HEK293 (cell line): ENCODE measurements at regions of chr1 and their contacts with region 1.

Region 1: DNA sequence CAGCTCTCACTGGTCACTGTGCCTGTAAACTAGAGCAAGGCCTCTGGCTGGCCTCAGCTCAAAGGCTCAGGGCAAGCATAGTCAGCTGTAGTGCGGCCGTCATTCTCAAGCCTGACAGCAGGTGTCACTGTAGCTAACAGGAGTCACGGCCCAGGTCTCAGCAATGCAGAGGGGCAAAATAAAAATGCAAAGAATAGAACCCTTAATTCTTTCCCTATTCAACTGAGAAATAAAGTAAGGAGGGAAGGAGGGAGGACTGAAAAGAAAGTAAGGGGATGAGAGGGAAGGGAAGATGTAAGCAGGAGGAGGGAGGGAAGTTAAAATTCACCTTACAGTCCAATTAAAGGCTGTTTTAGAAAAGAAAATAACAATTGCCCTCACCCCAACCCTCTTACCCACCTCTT is 106.1 kb downstream of the KIAA0319L start:
- H3K4me3 ChIP-seq: no peak overlapping the region
- H3K27ac ChIP-seq: no peak overlapping the region
- H3K4me1 ChIP-seq: no peaks in the 10 kb centered on the region
- CTCF ChIP-seq: no peak

Region 2: DNA sequence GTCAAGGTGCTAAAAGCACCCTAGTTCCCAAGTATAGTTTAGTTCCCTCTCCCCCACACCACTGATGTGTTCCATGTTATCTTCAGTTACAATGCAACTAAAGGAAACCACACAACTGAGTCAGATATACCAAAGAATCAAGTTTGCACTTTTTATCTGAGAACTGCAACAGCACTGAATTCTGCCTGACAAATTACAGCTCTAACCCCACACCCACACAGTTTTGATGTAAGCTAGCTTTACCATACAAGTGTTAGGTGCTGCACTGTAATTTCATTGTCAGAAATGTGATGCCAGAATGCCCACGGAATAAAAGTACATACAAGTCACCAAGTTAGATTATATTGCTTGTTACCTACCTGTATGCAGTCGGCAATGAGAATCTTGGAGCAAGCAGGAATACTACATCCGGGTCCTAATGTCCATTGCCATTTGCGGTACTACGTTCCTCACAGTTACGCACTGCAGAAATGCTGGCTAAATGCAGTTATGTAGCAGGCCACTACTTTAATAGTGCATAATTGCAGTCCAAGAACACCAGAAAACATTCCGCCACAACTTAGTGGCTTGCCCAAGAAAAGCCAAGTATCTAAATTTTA is 270.3 kb before region 1 on chr1:
- CTCF ChIA-PET with region 1: no interaction called
- POLR2A ChIA-PET with region 1: no interaction called
- H3K4me3 ChIP-seq: no peak overlapping the region
- H3K27ac ChIP-seq: no peak overlapping the region
- H3K4me1 ChIP-seq: no peaks in the 10 kb centered on the region
- CTCF ChIP-seq: no peak

Region 3: DNA sequence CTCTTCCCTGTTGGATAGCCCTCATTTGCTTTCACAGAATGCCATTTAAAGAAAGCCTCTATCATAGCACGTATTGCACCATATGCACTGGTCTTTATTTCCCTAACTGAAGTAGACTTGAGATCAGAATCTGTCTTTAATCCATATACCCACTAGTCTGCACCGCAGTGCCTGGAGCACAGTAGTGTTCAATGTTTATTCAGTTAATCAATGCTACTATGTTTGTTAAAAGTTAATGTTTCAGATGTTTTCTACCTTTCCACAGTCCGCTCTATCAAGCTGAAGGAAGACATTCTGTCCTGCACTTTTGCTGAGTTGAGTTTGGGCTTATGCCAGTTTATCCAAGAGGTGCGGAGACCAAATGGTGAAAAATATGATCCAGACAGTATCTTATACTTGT is 43.4 kb before region 1 on chr1:
- CTCF ChIA-PET with region 1: interaction called, 12 read pairs
- POLR2A ChIA-PET with region 1: no interaction called
- H3K4me3 ChIP-seq: no peak overlapping the region
- H3K27ac ChIP-seq: no peak overlapping the region
- H3K4me1 ChIP-seq: peaks cover 8% of the 10 kb centered on the region; the same call in 1 of the 2 replicates
- CTCF ChIP-seq: no peak

Region 4: GRCh38 chr1:35439626-35440025 is 11.5 kb before region 1 on chr1:
- CTCF ChIA-PET with region 1: interaction called, 31 read pairs
- POLR2A ChIA-PET with region 1: no interaction called
- H3K4me3 ChIP-seq: no peak overlapping the region
- H3K27ac ChIP-seq: no peak overlapping the region
- H3K4me1 ChIP-seq: no peaks in the 10 kb centered on the region
- CTCF ChIP-seq: no peak

Region 5: GRCh38 chr1:35466120-35466519 is 15.0 kb after region 1 on chr1:
- CTCF ChIA-PET with region 1: interaction called, 25 read pairs
- POLR2A ChIA-PET with region 1: no interaction called
- H3K4me3 ChIP-seq: no peak overlapping the region
- H3K27ac ChIP-seq: no peak overlapping the region
- H3K4me1 ChIP-seq: no peaks in the 10 kb centered on the region
- CTCF ChIP-seq: no peak

Region 6: DNA sequence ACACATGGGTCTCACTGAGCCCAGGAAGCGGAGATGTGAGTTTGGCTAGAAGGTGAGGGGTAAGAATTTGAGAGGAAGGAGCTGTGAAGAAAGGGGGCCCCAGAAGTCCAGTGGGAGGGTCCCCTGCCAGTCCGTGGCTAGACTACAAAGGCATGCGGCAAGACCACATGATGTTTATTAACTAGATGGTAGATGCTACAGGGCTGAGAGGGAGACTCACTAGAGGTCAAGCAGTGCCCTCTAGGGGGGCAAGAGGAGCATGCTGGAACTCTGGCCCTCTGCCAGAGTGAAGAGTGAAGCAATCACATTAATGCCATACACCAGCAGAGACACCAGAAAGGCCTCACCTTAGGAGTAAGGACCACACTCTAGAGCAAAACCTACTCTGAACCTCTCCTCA is 93.9 kb after region 1 on chr1:
- CTCF ChIA-PET with region 1: interaction called, 32 read pairs
- POLR2A ChIA-PET with region 1: interaction called, 9 read pairs
- H3K4me3 ChIP-seq: no peak overlapping the region
- H3K27ac ChIP-seq: no peak overlapping the region
- H3K4me1 ChIP-seq: peaks cover 12% of the 10 kb centered on the region
- CTCF ChIP-seq: peak; percentile 83

Region 7: DNA sequence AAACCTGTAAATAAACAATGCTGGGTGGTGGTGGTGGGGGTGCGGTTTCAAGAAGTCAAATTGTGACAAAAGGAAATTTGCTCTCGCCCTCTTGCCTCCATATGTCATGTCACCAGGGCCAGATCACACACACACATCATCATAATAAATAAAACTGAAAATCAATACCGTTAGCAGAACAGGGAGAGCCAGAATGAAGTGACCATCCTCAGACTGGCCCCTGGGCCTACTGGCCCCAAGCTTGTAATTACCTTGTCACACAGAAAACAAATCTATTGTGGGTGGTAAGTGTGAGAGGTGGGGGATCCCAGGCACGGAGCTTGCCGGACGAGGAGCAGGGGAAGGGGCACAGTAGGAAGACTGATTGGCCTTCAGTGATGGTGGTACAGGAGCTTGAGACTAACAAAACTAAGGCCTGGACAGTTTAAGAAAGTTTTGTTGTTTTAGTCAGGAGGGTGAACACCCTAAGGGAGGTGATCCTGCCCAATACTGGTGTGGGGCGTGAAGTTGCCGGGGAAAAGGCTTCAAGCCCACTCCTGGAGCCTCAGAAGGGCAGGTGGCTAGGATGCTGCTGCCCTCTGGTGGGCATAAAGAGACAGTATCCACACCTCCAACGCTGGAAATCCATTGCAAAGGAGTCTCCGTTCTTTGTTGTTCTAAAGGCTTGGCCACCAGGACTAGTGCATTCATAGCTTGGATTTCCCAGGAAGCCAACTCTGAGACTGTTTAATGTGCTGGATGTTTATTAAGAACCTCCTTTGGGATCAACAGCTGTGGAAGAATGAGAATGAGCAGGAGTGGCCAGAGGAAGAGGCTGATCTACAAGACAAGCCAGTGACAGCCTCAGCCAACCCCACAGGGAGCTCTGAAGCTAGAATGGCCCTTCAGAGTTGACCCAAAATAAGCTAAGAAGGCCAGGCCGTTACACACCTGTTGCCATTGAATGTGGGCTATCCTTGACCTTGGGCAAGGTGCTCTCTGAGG is 275.6 kb after region 1 on chr1:
- CTCF ChIA-PET with region 1: interaction called, 26 read pairs
- POLR2A ChIA-PET with region 1: no interaction called
- H3K4me3 ChIP-seq: no peak overlapping the region
- H3K27ac ChIP-seq: 0 out of 2 replicates have a peak overlapping the region, but pooled peaks have one; percentile 11
- H3K4me1 ChIP-seq: no peaks in the 10 kb centered on the region
- CTCF ChIP-seq: peak; percentile 77